CD4-positive, alpha-beta T cell (primary cell): ENCODE measurements at regions of chr15 and their contacts with region 1.

Region 1: GRCh38 chr15:81400640-81401236 is 26.7 kb upstream of the TMC3 start:
- DNase-seq: peak in 4 of 14 experiments; percentile 5 to 77 (median 66)
- ATAC-seq: peak; percentile 41
- H3K4me3 ChIP-seq: no peak overlapping the region
- H3K4me3 Mint-ChIP-seq: no peak overlapping the region
- H3K27ac ChIP-seq: no peak overlapping the region
- H3K27ac Mint-ChIP-seq: no peak overlapping the region
- H3K4me1 ChIP-seq: no peaks in the 10 kb centered on the region
- H3K4me1 Mint-ChIP-seq: no peaks in the 10 kb centered on the region
- H3K27me3 ChIP-seq: no peaks in the 10 kb centered on the region
- H3K27me3 Mint-ChIP-seq: peaks cover 6% of the 10 kb centered on the region
- CTCF ChIP-seq: peak; percentile 81

Region 2: DNA sequence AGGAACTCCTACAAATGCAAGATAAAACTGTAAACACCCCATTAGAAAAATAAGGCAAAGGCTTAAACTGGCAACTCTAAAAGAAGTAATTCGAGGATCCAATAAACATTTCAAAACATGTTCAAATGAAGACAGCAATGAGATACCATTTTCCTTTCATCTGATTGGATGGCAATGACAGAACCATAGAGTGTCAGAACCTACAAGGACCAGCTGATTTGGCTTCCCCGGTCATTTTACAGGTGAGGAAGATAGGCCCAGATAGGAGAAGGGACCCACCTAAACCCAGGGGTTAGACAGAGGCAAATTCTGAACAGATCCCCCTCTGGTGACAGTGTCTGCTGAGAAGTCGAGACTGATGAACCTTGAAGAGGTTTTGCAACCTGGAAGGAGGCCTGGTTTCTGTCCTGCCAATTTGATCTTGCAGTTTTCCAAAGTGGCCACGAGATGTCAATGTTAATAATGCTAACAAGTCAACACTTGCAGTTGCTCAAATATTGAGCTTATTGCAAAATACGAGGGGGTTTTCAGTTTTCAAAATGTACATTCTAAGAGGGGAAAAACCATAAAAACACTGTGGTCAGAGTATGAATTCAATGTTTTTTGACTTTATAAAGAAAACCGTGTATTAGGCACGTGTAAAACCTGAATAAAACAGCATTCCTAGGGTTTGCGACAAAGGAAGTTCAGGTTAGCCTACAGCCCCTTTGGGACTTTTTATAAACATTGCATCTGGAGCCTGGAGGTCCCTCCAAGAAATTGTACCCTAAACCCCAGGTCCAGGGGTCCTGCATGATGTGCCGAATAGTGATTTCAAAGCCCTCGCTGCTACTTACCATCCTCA is 245.1 kb before region 1 on chr15:
- CTCF ChIA-PET with region 1: no interaction called
- POLR2A ChIA-PET with region 1: no interaction called
- intact Hi-C with region 1: loop called in 1 of 2 experiments (anchors 2 kb)
- DNase-seq: peak in 5 of 14 experiments; percentile 3 to 51 (median 40)
- ATAC-seq: no peak
- H3K4me3 ChIP-seq: no peak overlapping the region
- H3K4me3 Mint-ChIP-seq: no peak overlapping the region
- H3K27ac ChIP-seq: no peak overlapping the region
- H3K27ac Mint-ChIP-seq: no peak overlapping the region
- H3K4me1 ChIP-seq: peaks cover under 1% of the 10 kb centered on the region
- H3K4me1 Mint-ChIP-seq: peaks cover under 1% of the 10 kb centered on the region
- H3K27me3 ChIP-seq: no peaks in the 10 kb centered on the region
- H3K27me3 Mint-ChIP-seq: peaks cover 23% of the 10 kb centered on the region
- CTCF ChIP-seq: peak; percentile 43

Region 3: GRCh38 chr15:81336568-81336967 is 64.2 kb before region 1 on chr15:
- CTCF ChIA-PET with region 1: interaction called, 3 read pairs
- POLR2A ChIA-PET with region 1: no interaction called
- intact Hi-C with region 1: loop called in 1 of 2 experiments (anchors 2 kb)
- DNase-seq: peak in 11 of 14 experiments; percentile 23 to 71 (median 50)
- ATAC-seq: no peak
- H3K4me3 ChIP-seq: no peak overlapping the region
- H3K4me3 Mint-ChIP-seq: no peak overlapping the region
- H3K27ac ChIP-seq: no peak overlapping the region
- H3K27ac Mint-ChIP-seq: no peak overlapping the region
- H3K4me1 ChIP-seq: no peaks in the 10 kb centered on the region
- H3K4me1 Mint-ChIP-seq: peaks cover 13% of the 10 kb centered on the region
- H3K27me3 ChIP-seq: no peaks in the 10 kb centered on the region
- H3K27me3 Mint-ChIP-seq: no peaks in the 10 kb centered on the region
- CTCF ChIP-seq: peak; percentile 71